ENCODE measurements at regions of chr7 and their contacts with region 1.

Region 1: GRCh38 chr7:113421696-113422330 is 303.5 kb upstream of the SMIM30 start:
- DNase-seq: peak; percentile 88
- H3K4me3 Mint-ChIP-seq: no peak overlapping the region
- H3K27ac Mint-ChIP-seq: no peak overlapping the region
- H3K4me1 Mint-ChIP-seq: peaks cover 5% of the 10 kb centered on the region
- H3K27me3 Mint-ChIP-seq: no peaks in the 10 kb centered on the region
- CTCF ChIP-seq: peak; percentile 89

Region 2: DNA sequence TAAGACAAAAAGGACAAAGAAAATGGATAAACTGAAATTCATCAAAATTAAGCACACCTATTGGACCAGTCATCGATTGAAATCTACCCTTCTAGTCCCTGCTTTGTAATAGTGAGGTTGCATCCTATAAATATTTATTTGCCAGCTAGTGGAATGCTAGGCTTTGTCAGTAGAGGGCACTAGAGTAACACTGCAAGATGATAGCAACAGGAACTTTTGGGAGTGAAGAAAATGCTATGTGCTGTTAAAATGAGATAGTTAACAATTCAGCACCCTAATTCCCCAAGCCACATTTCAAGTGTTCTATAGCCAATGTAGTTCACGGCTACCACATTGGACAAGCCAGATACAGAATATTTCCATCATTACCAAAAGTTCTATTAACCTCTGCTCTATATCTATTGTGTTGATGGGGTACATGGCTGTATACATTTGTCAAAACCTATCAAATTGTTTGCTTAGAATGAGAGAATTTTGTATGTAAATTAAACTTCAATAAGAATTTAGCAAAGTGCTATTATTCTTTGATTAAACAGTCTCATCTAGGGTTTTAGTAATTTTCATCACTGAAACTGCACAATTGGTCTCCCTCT is 871.2 kb before region 1 on chr7:
- CTCF ChIA-PET with region 1: interaction called, 4 read pairs
- POLR2A ChIA-PET with region 1: no interaction called
- intact Hi-C with region 1: loop called (anchors 1 kb)
- DNase-seq: peak; percentile 72
- H3K4me3 Mint-ChIP-seq: no peak overlapping the region
- H3K27ac Mint-ChIP-seq: no peak overlapping the region
- H3K4me1 Mint-ChIP-seq: no peaks in the 10 kb centered on the region
- H3K27me3 Mint-ChIP-seq: no peaks in the 10 kb centered on the region
- CTCF ChIP-seq: peak; percentile 95

Region 3: DNA sequence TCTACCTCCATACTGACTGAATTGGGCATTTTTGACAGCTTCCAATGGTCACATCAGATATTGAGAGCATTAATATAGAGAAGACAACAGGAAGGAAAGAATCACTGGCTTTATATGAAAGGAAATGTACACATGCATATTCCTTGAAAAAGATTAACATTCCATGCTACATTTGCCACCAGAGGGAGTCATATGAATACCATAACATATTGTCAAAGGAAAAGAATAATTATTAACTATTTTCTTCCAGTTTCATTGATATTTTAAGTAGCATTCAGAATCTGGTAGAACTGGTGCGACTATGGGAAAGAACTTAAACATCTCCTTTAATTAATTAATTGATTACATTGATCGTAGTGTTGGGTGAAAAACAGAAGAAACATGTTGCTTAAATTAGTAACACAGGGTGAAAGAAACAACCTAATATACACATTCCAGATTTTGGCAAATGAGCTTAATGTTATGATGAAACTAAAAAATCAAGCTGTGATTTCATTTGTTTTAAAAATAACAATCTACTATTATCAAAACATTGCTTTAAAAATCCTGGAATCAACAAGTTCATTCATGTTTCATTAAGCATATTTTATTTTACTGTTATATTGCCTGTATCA is 406.7 kb before region 1 on chr7:
- CTCF ChIA-PET with region 1: interaction called, 16 read pairs
- POLR2A ChIA-PET with region 1: no interaction called
- intact Hi-C with region 1: loop called (anchors 1 kb)
- DNase-seq: peak; percentile 53
- H3K4me3 Mint-ChIP-seq: no peak overlapping the region
- H3K27ac Mint-ChIP-seq: peak overlapping the region; percentile 70
- H3K4me1 Mint-ChIP-seq: peaks cover 15% of the 10 kb centered on the region
- H3K27me3 Mint-ChIP-seq: no peaks in the 10 kb centered on the region
- CTCF ChIP-seq: no peak

Region 4: DNA sequence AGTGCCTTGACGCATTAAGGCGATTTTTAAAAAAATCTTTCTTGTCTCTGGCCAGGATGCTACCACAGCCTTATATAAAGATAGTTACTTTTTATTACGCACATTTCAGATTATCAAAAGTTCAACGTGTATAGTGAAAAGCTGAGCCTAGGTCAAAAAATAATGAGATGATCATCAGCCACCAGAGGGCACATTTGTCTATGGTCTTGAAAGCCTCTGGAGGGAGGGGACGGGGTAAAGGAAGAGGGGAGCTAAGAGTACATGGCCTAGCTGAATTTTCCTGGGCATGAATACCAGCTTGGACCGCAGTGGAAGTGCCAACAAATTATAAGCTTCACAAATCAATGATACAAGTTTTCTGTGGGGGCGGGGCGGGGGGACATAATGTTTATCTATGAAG is 17.6 kb before region 1 on chr7:
- CTCF ChIA-PET with region 1: interaction called, 11 read pairs
- POLR2A ChIA-PET with region 1: no interaction called
- intact Hi-C with region 1: no loop called
- DNase-seq: peak; percentile 40
- H3K4me3 Mint-ChIP-seq: no peak overlapping the region
- H3K27ac Mint-ChIP-seq: no peak overlapping the region
- H3K4me1 Mint-ChIP-seq: no peaks in the 10 kb centered on the region
- H3K27me3 Mint-ChIP-seq: no peaks in the 10 kb centered on the region
- CTCF ChIP-seq: peak; percentile 33

Region 5: DNA sequence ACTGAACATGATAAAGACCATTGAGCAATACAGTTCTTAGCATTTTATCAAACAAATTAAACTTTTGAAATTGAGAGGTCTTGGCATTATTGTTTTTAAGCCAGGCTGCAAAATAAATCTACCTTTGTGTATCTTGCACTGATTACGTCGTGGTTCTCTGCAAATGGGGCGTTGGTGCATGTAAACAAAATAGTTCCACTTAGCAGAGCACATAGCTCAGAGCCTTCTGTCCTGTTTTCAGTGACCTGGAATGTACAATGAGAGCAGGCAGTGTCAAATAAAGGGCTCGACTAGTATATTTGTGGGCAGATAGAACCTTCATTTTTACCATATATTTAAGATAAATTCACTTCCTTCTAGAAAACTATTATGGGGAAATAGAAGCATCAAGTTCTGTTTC is 30.4 kb after region 1 on chr7:
- CTCF ChIA-PET with region 1: interaction called, 11 read pairs
- POLR2A ChIA-PET with region 1: no interaction called
- intact Hi-C with region 1: no loop called
- DNase-seq: no peak
- H3K4me3 Mint-ChIP-seq: no peak overlapping the region
- H3K27ac Mint-ChIP-seq: no peak overlapping the region
- H3K4me1 Mint-ChIP-seq: no peaks in the 10 kb centered on the region
- H3K27me3 Mint-ChIP-seq: no peaks in the 10 kb centered on the region
- CTCF ChIP-seq: no peak

Region 6: GRCh38 chr7:113519472-113519871 is 97.7 kb after region 1 on chr7:
- CTCF ChIA-PET with region 1: no interaction called
- POLR2A ChIA-PET with region 1: no interaction called
- intact Hi-C with region 1: no loop called
- DNase-seq: peak; percentile 4
- H3K4me3 Mint-ChIP-seq: no peak overlapping the region
- H3K27ac Mint-ChIP-seq: no peak overlapping the region
- H3K4me1 Mint-ChIP-seq: no peaks in the 10 kb centered on the region
- H3K27me3 Mint-ChIP-seq: no peaks in the 10 kb centered on the region
- CTCF ChIP-seq: no peak

Region 7: GRCh38 chr7:113698556-113699220 is 276.9 kb after region 1 on chr7:
- CTCF ChIA-PET with region 1: interaction called, 12 read pairs
- POLR2A ChIA-PET with region 1: no interaction called
- intact Hi-C with region 1: loop called (anchors 5 kb)
- DNase-seq: peak; percentile 49
- H3K4me3 Mint-ChIP-seq: no peak overlapping the region
- H3K27ac Mint-ChIP-seq: no peak overlapping the region
- H3K4me1 Mint-ChIP-seq: no peaks in the 10 kb centered on the region
- H3K27me3 Mint-ChIP-seq: no peaks in the 10 kb centered on the region
- CTCF ChIP-seq: peak; percentile 75

Region 8: DNA sequence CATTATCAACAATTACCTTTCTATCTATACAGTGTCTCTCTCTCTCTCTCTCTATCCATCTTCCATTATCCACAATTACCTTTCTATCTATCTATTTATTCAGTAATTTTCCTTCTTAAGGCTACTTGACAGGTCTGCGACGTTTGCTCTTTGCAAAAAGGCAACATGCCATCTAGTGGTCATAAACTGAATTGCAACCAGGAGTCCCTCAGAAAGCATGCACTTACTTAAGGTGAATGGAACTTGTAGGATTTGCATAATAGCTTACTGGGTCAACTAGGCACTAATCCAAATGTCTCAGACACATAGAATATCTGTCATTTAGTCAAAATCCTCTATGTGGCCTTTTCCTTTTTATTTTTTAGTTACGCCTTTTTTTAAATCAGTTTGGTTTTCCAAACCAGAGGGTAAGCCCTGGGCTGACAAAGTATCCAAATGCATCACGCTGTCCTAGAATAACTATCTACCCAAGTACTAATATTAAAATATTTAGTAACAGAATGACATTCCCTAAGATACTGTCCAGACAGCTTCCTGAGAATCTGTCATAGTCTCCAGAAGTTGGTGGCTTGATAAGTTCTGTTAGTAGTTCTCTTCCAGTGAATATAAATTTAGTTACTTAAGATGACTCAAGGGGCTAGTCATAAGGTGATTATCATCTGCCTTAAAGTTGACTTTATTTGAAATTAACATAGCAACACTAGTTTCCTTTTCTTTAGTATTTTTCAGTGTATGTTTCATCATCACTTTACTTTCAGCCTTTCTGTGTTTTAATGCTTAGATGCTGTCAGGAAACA is 288.7 kb after region 1 on chr7:
- CTCF ChIA-PET with region 1: interaction called, 12 read pairs
- POLR2A ChIA-PET with region 1: no interaction called
- intact Hi-C with region 1: loop called (anchors 5 kb)
- DNase-seq: peak; percentile 84
- H3K4me3 Mint-ChIP-seq: no peak overlapping the region
- H3K27ac Mint-ChIP-seq: no peak overlapping the region
- H3K4me1 Mint-ChIP-seq: peaks cover under 1% of the 10 kb centered on the region
- H3K27me3 Mint-ChIP-seq: no peaks in the 10 kb centered on the region
- CTCF ChIP-seq: peak; percentile 90

Region 9: DNA sequence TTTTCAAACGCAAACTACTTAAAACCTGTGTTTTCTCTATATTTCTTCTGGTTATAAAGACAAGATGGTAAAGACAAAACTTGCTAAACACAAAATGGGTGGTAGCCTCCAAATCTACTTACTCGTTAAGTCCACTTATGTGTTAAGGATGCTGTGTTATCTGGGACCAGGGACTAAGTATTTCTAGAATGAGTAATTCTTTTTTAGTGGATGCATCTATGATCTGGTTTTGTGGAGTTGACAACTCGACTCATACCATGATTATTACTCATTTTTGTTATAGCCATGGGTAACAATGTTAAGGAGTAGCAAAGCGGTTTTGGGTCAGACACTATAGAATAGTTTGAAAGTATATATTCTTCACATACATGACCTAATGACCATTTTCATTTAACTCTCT is 753.3 kb after region 1 on chr7:
- CTCF ChIA-PET with region 1: no interaction called
- POLR2A ChIA-PET with region 1: no interaction called
- intact Hi-C with region 1: no loop called
- DNase-seq: no peak
- H3K4me3 Mint-ChIP-seq: no peak overlapping the region
- H3K27ac Mint-ChIP-seq: no peak overlapping the region
- H3K4me1 Mint-ChIP-seq: no peaks in the 10 kb centered on the region
- H3K27me3 Mint-ChIP-seq: peaks cover 82% of the 10 kb centered on the region
- CTCF ChIP-seq: no peak